Activated CD8-positive, alpha-beta T cell treated with anti-CD3 and anti-CD28 coated beads, Interleukin-2, amount 10 ng/mL, durations not matched to agents 7 days and 5 days (primary cell): ENCODE measurements at regions of chr16 and their contacts with region 1.

Region 1: DNA sequence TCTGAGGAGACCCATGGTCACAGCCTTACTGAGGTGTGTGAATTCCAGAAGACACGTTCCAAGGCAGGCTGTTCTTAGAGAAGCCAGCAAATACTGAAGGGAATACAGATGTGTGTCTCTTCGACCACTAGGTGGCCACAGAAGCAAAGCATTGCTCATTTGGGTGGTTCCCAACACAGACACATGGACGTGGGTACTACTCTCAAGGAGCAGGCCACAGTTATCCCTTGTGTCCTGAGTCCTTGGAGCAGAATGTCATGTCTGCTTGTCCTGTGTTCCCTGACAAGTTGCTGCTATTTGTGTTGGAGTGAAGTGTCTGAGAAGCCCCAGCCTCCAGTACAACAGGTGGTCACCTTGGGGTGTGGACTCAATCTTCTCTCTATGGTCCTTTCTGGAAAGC is 30.3 kb downstream of the HMOX2 start:
- DNase-seq: peak; percentile 74
- ATAC-seq: peak; percentile 60
- H3K4me3 Mint-ChIP-seq: peak overlapping the region; percentile 73
- H3K27ac Mint-ChIP-seq: peak overlapping the region; percentile 95
- H3K4me1 Mint-ChIP-seq: peaks cover 63% of the 10 kb centered on the region
- H3K27me3 Mint-ChIP-seq: no peaks in the 10 kb centered on the region

Region 2: DNA sequence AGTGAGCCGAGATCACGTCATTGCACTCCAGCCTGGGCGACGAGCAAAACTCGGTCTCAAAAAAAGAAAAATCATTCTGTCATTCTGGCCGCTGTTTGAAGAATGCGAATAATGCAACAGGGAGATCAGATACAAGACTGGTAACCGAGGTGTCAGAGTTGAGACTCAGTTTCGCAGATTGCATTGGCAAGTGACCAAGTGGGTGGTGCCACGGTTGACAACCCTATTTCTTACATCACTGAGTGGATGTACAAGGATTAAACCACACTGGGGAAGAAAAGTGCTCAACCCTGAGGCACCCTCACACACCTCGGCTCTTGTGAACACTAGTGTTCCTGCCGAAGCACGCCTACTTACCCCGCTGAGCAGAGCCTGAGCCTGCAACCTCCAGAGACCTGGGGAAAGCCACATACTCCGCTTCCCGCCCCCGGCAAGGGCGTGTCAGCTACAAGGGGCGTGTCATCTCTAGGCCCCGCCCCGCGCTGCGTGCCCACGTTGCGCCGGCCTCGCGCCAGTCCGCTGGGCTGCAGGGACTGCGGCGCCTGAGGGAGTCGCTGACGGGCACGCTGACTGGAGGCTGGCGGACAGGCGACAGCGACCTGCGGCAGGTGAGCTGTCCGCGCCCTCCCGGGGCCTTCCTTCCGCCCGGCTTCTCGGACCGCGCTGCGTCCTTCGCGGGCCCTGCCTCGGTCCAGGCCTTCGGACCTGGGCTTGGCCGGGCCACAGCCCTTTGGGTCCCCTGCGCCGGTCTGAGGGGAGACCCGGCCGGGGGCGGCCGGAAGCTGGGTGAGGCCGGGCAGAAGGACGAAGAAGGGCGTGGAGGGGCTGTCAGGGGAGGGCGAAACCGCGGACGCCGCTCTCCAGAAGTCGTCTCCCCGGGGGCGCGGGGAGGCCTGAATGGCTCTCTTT is 30.3 kb before region 1 on chr16 and contains the start of gene HMOX2:
- CTCF ChIA-PET with region 1: interaction called, 173 read pairs
- POLR2A ChIA-PET with region 1: interaction called, 30 read pairs
- DNase-seq: peak; percentile 95
- ATAC-seq: peak; percentile 84
- H3K4me3 Mint-ChIP-seq: peak within 1 kb of the TSS; percentile 92
- H3K27ac Mint-ChIP-seq: peak within 1 kb of the TSS; percentile 90
- H3K4me1 Mint-ChIP-seq: peaks cover 45% of the 10 kb centered on the region
- H3K27me3 Mint-ChIP-seq: no peaks in the 10 kb centered on the region
- total RNA-seq, gene HMOX2: 92.6 to 97.4 TPM

Region 3: DNA sequence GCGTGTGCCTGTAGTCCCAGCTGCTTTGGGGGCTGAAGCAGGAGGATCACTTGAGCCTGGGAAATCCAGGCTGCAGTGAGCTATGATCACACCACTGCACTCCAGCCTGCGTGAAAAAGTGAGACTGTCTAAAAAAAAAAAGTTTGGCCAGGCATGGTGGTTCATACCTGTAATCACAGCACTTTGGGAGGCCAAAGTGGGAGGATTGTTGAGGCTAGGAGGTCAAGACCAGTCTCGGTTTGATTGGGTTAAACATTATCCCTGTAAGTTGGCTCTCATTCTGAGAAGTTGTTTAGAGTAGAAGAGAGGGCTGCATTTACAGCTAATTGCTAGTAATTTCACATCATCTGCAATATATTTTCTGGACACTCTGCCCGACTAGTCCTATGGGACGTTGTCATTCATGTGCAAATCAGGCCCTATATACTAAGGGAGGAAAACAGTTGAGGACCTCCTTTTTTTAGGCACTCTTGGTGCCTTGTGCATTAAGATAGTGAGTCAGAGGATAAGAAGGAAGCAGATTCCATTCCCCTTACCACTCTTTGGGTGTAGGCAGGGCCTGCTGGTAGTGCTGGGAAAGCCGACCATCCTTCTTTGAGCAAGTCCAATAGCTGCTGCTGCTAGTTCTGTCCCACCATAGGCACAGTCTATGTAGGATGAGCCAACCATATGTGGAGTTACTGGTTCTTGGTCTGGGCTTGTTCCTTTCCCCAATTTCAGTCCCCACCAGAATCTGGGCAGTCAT is 11.5 kb before region 1 on chr16:
- CTCF ChIA-PET with region 1: interaction called, 37 read pairs
- POLR2A ChIA-PET with region 1: interaction called, 14 read pairs
- DNase-seq: no peak
- ATAC-seq: no peak
- H3K4me3 Mint-ChIP-seq: no peak overlapping the region
- H3K27ac Mint-ChIP-seq: peak overlapping the region; percentile 43
- H3K4me1 Mint-ChIP-seq: peaks cover 65% of the 10 kb centered on the region
- H3K27me3 Mint-ChIP-seq: no peaks in the 10 kb centered on the region

Region 4: GRCh38 chr16:4538350-4539235 is 32.1 kb after region 1 on chr16 and contains the start of gene CDIP1:
- CTCF ChIA-PET with region 1: interaction called, 159 read pairs
- POLR2A ChIA-PET with region 1: interaction called, 7 read pairs
- DNase-seq: peak; percentile 97
- ATAC-seq: peak; percentile 85
- H3K4me3 Mint-ChIP-seq: peak within 1 kb of the TSS; percentile 80
- H3K27ac Mint-ChIP-seq: peak within 1 kb of the TSS; percentile 84
- H3K4me1 Mint-ChIP-seq: peaks cover 36% of the 10 kb centered on the region
- H3K27me3 Mint-ChIP-seq: no peaks in the 10 kb centered on the region
- total RNA-seq, gene CDIP1: 44.0 to 48.7 TPM

Region 5: GRCh38 chr16:4574919-4575705 is 68.7 kb after region 1 on chr16:
- CTCF ChIA-PET with region 1: interaction called, 22 read pairs
- POLR2A ChIA-PET with region 1: no interaction called
- DNase-seq: peak; percentile 36
- ATAC-seq: peak; percentile 64
- H3K4me3 Mint-ChIP-seq: no peak overlapping the region
- H3K27ac Mint-ChIP-seq: peak overlapping the region; percentile 34
- H3K4me1 Mint-ChIP-seq: peaks cover 11% of the 10 kb centered on the region
- H3K27me3 Mint-ChIP-seq: no peaks in the 10 kb centered on the region

Region 6: GRCh38 chr16:4616047-4616811 is 109.8 kb after region 1 on chr16:
- CTCF ChIA-PET with region 1: interaction called, 12 read pairs
- POLR2A ChIA-PET with region 1: interaction called, 3 read pairs
- DNase-seq: peak; percentile 100
- ATAC-seq: peak; percentile 91
- H3K4me3 Mint-ChIP-seq: peak overlapping the region; percentile 97
- H3K27ac Mint-ChIP-seq: peak overlapping the region; percentile 99
- H3K4me1 Mint-ChIP-seq: peaks cover 44% of the 10 kb centered on the region
- H3K27me3 Mint-ChIP-seq: no peaks in the 10 kb centered on the region